PC-9 (cell line): ENCODE measurements at regions of chr7 and their contacts with region 1.

Region 1: DNA sequence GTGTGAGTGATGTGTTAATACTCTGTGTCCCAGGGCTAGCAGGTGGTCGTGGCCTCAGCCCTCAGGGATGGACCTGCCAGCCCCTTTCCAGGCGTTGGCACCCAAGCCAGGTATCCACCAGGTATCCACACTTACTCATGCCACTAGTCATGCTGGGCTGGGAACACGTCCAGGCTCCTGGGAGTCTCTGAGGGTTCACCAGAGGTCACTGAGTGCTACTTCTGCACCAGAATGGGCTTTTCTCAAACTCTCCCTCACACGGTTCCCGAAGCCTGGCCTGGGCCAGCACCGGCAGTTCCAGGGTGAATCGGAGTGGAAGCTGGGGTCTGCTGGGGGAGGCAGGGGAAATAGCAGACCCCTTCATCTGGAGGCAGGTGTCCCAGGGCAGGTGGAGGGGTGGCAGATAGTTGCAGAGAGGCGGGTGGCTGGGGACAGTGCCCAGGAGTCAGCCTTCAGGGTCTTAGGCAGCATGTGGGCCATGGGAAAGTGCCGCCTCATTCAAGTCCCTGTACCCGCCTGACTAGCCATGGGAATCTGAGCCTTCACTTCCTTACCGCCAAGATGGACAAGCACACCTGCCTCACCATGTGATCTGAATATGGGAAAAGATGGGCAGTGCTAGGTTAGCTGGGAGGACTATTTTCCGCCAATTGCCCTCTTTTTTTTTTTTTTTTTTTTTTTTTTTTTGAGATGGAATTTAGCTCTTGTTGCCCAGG is 95.5 kb upstream of the GTF2I start:
- DNase-seq: peak in 1 of 2 experiments; percentile 45
- H3K4me3 ChIP-seq: no peak overlapping the region
- H3K27ac ChIP-seq: no peak overlapping the region
- H3K4me1 ChIP-seq: 0 out of 2 replicates have a peak, but pooled peaks cover 7% of the 10 kb centered on the region
- H3K27me3 ChIP-seq: no peaks in the 10 kb centered on the region
- CTCF ChIP-seq: no peak

Region 2: GRCh38 chr7:74115326-74115725 is 446.7 kb before region 1 on chr7:
- CTCF ChIA-PET with region 1: no interaction called
- POLR2A ChIA-PET with region 1: interaction called, 22 read pairs
- intact Hi-C with region 1: no loop called
- DNase-seq: no peak
- H3K4me3 ChIP-seq: no peak overlapping the region
- H3K27ac ChIP-seq: no peak overlapping the region
- H3K4me1 ChIP-seq: no peaks in the 10 kb centered on the region
- H3K27me3 ChIP-seq: no peaks in the 10 kb centered on the region
- CTCF ChIP-seq: 0 out of 2 replicates have a peak, but pooled peaks have one; percentile 16